Activated T-helper 1 cell treated with anti-CD3 and anti-CD28 coated beads, Interleukin-12 subunit alpha, Interleukin-12 subunit beta, Interleukin-2, Interleukin-4 antibody, amounts not matched to agents 30 ng/mL and 10 ng/mL and 1 ng/mL, durations not matched to agents 14 hours and 24 hours and 36 hours (primary cell): ENCODE measurements at regions of chr17 and their contacts with region 1.

Region 1: DNA sequence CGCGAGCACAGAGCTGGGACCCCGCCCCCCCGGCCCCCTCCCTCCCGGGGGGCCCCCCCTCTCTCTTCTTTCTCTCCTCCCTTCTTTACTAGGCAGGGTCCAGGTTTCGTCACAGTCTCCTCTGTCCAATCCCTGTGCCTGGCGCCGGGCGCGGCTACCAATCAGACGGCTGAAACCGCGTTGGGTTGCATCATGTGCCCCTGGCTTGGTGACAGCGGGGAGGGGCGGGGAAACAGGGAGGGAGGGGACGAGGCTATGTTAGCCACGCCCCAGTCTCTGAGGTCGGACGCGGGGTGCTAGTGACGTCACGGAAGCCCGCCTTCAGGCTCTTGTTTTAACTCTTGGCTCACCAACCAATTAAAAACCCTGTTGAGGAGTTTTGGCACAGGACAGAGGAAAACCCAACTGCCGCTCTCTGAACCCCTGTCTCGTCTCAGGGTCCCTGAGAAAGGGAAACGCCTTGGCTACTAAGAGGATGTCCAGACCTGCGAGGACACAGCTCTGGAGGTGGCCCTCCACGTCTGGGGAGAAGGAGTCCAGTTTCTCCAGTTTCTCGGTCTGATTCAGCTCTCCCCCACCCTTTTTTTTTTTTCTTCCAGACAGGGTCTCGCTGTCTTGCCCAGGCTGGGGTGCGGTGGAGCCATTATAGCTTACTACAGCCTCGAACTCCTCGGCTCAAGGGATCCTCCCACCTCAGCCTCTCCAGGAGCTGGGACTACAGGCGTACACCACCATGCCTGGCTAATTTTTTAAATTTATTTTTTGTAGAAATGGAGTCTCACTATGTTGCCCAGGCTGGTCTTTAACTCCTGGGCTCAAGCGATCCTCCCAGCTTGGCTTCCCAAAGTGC is 439 bp upstream of the PLEKHH3 start:
- DNase-seq: peak; percentile 97
- H3K4me3 Mint-ChIP-seq: peak overlapping the region; percentile 87
- H3K27ac Mint-ChIP-seq: peak overlapping the region; percentile 83
- H3K4me1 Mint-ChIP-seq: peaks cover 50% of the 10 kb centered on the region
- H3K27me3 Mint-ChIP-seq: peaks cover 36% of the 10 kb centered on the region

Region 2: DNA sequence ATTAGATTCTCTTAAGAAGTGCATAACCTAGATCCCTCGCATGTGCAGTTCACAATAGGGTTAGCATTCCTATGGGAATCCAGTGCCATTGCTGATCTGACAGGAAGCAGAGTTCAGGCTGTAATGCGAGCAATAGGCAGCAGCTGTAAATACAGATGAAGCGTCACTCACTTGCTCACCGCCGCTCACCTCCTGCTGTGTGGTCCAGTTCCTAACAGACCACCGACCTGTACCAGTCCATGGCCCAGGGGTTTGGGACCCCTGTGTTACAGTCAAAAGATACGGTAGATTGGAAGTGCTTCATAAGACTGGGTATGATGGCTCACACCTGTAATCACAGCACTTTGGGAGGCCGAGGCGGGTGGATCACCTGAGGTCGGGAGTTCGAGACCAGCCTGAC is 386.1 kb before region 1 on chr17:
- intact Hi-C with region 1: no loop called
- DNase-seq: no peak
- H3K4me3 Mint-ChIP-seq: peak overlapping the region; percentile 91
- H3K27ac Mint-ChIP-seq: peak overlapping the region; percentile 80
- H3K4me1 Mint-ChIP-seq: peaks cover 65% of the 10 kb centered on the region
- H3K27me3 Mint-ChIP-seq: no peaks in the 10 kb centered on the region

Region 3: DNA sequence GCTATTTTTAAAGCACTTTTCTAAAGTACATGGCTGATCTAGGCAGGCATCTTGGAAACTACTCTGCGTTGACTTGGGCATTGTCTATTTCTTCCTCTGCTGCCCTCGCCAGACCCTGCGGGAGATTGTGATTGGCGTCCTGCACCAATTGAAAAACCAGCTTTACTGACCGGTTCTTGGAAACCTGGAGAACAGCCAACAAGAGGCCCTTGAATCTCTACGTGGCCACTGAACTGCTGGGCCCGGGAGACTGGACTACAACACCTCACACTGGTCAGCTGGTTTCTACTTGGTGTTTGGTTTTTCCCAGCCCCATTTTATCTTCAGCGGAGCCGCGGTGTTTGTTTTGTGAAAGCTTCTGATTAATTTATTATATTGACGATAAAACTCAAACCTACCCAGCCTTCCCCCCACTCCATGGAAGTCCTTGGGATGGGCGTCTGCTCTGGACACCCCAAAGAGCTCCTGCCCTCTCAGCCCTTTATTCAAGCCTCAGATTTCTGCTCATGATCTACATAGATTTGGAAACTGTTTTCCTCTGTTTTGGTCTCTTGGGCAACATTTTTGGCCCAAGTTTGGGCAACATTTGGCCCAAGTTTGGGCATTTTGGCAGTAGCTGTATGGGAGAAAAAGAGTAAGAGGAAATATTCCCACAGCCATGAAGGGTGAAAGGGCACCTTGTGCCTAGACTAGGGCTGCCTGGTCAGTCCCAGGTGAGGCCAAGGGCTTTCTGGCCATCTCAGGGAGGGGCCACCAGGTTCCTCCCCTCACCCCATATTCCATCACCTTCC is 105.6 kb before region 1 on chr17:
- intact Hi-C with region 1: no loop called
- DNase-seq: no peak
- H3K4me3 Mint-ChIP-seq: no peak overlapping the region
- H3K27ac Mint-ChIP-seq: no peak overlapping the region
- H3K4me1 Mint-ChIP-seq: peaks cover 42% of the 10 kb centered on the region
- H3K27me3 Mint-ChIP-seq: no peaks in the 10 kb centered on the region

Region 4: DNA sequence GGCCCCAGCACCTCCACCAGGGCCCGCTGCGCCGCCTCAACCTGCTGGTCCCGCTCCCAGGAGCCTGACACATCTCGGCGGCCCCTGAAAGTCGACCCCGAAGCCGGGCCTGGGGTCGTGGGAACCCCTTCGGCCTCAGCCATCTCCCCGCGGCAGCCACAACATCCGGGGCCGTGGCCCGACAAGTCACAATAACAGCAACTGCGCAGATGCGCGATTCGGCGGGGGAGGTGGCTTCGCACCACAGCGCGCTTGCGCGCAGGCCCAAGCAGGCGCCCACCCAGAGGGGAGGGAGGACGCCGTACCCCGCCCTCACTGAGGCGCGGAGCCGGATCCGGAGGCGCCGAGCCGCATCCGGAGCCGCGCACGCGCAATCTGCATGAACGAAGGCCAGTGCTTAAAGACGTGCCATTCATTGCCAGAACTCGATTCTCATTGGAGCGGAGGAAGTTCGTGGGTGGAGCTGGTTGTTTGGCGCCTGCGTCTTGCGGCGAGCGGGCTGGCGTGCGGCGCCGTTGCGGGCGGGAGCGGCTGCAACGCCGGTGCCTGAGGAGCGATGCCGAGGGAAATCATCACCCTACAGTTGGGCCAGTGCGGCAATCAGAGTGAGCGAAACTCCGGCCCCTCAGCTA is 67.9 kb before region 1 on chr17 and contains the starts of genes RETREG3 and TUBG1:
- intact Hi-C with region 1: loop called (anchors 1 kb)
- DNase-seq: peak; percentile 100
- H3K4me3 Mint-ChIP-seq: peak within 1 kb of the TSS; percentile 100
- H3K27ac Mint-ChIP-seq: peak within 1 kb of the TSS; percentile 94
- H3K4me1 Mint-ChIP-seq: peaks cover 39% of the 10 kb centered on the region
- H3K27me3 Mint-ChIP-seq: no peaks in the 10 kb centered on the region
- total RNA-seq, gene RETREG3: 41.1 and 43.4 TPM in 2 replicates
- total RNA-seq, gene TUBG1: 90.0 and 95.2 TPM in 2 replicates

Region 5: DNA sequence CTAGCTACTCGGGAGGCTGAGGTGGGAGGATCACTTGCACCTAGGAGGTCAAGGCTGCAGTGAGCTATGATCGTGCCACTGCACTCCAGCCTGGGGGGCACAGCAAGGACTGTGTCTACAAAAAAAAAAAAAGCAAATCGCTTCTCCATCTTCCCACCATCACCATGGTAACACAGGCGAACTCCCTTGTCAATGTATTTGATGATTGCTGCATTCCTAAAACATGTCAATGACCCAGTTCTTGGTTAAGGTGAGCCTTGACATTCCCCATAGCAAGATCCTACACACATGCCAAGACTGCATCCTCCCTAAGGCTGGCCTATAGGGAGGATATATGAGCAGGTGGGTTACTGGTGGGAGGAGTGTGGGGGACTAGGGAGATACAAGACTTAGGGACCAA is 17.3 kb after region 1 on chr17:
- intact Hi-C with region 1: no loop called
- DNase-seq: no peak
- H3K4me3 Mint-ChIP-seq: no peak overlapping the region
- H3K27ac Mint-ChIP-seq: no peak overlapping the region
- H3K4me1 Mint-ChIP-seq: no peaks in the 10 kb centered on the region
- H3K27me3 Mint-ChIP-seq: peaks cover 7% of the 10 kb centered on the region

Region 6: GRCh38 chr17:42704837-42705494 is 27.7 kb after region 1 on chr17:
- intact Hi-C with region 1: loop called (anchors 1 kb)
- DNase-seq: peak; percentile 14
- H3K4me3 Mint-ChIP-seq: no peak overlapping the region
- H3K27ac Mint-ChIP-seq: no peak overlapping the region
- H3K4me1 Mint-ChIP-seq: peaks cover 14% of the 10 kb centered on the region
- H3K27me3 Mint-ChIP-seq: peaks cover 4% of the 10 kb centered on the region

Region 7: DNA sequence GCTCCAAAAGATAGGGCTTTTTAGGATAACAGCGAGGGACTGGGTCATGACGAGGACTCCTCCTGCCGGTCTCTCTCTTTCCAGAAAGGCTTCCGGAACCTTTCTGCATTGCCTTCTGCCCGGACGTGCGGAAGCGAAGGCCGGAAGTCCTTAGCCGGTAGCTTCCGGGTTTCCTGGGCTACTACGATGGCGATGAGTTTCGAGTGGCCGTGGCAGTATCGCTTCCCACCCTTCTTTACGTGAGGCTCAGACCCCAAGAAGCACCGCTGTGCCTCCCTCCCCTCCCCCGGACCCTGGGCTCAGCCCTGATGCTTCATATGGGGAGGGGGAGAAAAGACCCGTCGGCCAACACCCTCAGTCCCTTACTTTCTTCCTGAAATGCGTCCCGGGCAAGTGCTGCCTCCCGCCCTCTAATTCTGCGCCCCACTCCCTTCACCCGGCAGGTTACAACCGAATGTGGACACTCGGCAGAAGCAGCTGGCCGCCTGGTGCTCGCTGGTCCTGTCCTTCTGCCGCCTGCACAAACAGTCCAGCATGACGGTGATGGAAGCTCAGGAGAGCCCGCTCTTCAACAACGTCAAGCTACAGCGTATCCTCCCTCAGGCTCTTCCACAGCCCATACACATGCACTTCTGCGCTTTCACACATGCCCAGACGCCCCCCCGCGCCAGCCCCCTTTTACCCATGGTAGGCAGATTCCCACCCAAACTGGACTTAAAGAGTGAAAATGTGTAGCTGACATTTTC is 96.2 kb after region 1 on chr17 and contains the start of gene VPS25:
- intact Hi-C with region 1: loop called (anchors 5 kb)
- DNase-seq: peak; percentile 71
- H3K4me3 Mint-ChIP-seq: peak within 1 kb of the TSS; percentile 99
- H3K27ac Mint-ChIP-seq: peak within 1 kb of the TSS; percentile 96
- H3K4me1 Mint-ChIP-seq: peaks cover 27% of the 10 kb centered on the region
- H3K27me3 Mint-ChIP-seq: no peaks in the 10 kb centered on the region
- total RNA-seq, gene VPS25: 93.6 and 97.0 TPM in 2 replicates

Region 8: DNA sequence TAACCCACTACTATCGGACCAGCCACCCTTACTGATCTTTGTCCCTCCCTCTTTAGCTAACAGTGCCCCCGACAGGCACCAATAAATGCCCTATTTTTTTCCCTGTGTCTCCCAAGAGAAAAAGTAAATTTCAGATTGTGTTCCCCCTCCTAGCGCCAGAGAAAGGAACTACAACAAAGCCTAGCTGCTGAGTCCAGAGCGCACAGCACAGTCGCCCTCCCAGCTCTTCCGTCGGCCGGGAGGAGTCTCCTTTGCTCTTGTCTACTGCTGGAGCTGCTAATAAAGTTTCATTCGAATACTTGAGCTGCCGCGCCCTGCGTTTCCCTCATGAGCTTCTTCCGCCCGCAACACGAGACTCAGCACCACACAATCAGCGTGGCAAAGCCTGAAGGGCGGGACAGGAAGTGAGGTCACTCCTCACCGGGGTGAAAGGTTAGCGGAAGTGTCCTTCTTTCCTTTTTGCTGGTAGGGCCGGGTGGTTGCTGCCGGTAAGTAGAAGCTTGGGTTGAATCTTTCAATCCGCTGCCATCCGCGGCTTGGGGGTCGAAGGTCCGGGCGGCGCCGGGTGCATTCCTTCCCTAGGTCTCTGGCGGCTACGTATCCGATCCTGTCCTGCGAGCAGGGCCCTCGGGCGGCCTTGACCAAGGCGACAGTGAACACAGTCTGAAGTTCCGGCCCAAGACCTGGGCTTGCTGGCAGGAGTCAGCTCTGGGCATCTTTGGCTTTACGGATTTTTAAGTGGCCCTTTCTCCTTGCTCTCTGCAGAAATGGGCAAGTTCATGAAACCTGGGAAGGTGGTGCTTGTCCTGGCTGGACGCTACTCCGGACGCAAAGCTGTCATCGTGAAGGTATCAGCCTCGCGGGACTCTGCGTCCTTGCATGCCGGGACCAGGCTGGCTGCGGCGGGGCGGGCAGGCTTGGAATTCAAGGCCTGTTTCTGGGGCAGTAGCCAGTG is 321.0 kb after region 1 on chr17 and contains the start of gene RPL27:
- intact Hi-C with region 1: loop called (anchors 1 kb)
- DNase-seq: peak; percentile 95
- H3K4me3 Mint-ChIP-seq: peak within 1 kb of the TSS; percentile 94
- H3K27ac Mint-ChIP-seq: peak within 1 kb of the TSS; percentile 96
- H3K4me1 Mint-ChIP-seq: peaks cover 23% of the 10 kb centered on the region
- H3K27me3 Mint-ChIP-seq: no peaks in the 10 kb centered on the region
- total RNA-seq, gene RPL27: 1,049 and 1,126 TPM in 2 replicates

Region 9: GRCh38 chr17:43170766-43171585 is 493.7 kb after region 1 on chr17 and contains the start of gene NBR1:
- intact Hi-C with region 1: no loop called
- DNase-seq: peak; percentile 96
- H3K4me3 Mint-ChIP-seq: no peak within 1 kb of the TSS
- H3K27ac Mint-ChIP-seq: no peak within 1 kb of the TSS
- H3K4me1 Mint-ChIP-seq: peaks cover 26% of the 10 kb centered on the region
- H3K27me3 Mint-ChIP-seq: no peaks in the 10 kb centered on the region
- total RNA-seq, gene NBR1: 53.4 and 56.1 TPM in 2 replicates